ENCODE measurements at regions of chr6 and their contacts with region 1.

Region 1: DNA sequence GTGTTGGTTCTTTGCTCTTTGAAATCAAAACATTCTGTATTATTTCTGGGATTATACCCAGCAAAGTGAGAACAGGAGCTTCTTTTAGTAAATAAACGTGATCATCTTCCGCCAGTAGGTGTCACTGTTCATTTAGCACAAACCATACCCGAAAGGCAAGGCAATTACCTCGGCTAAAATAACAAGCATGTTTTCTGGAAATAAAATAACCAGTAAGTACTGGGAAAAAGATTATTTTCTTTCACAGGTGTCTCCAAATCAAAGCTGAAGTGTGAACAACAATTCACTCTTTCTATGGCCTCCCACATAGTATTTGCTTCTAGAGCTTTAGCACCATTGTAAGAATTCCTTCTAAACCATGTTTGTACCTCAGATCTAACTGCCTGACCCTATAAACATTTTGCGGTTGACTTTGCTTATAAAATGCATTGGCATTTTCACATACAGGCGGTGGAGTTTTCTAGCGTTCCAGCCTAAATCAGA is 144.6 kb upstream of the AGPAT4 start:
- DNase-seq: peak; percentile 73
- H3K4me3 ChIP-seq: no peak overlapping the region
- H3K27ac ChIP-seq: no peak overlapping the region
- H3K4me1 ChIP-seq: no peaks in the 10 kb centered on the region
- H3K27me3 ChIP-seq: no peaks in the 10 kb centered on the region
- CTCF ChIP-seq: peak; percentile 45 to 50
- POLR2A ChIP-seq: no peak

Region 2: GRCh38 chr6:161186173-161186769 is 232.2 kb before region 1 on chr6:
- CTCF ChIA-PET with region 1: no interaction called
- POLR2A ChIA-PET with region 1: no interaction called
- dilution Hi-C with region 1: no loop called
- intact Hi-C with region 1: no loop called
- DNase-seq: no peak
- H3K4me3 ChIP-seq: no peak overlapping the region
- H3K27ac ChIP-seq: no peak overlapping the region
- H3K4me1 ChIP-seq: no peaks in the 10 kb centered on the region
- H3K27me3 ChIP-seq: no peaks in the 10 kb centered on the region
- CTCF ChIP-seq: no peak
- POLR2A ChIP-seq: no peak

Region 3: DNA sequence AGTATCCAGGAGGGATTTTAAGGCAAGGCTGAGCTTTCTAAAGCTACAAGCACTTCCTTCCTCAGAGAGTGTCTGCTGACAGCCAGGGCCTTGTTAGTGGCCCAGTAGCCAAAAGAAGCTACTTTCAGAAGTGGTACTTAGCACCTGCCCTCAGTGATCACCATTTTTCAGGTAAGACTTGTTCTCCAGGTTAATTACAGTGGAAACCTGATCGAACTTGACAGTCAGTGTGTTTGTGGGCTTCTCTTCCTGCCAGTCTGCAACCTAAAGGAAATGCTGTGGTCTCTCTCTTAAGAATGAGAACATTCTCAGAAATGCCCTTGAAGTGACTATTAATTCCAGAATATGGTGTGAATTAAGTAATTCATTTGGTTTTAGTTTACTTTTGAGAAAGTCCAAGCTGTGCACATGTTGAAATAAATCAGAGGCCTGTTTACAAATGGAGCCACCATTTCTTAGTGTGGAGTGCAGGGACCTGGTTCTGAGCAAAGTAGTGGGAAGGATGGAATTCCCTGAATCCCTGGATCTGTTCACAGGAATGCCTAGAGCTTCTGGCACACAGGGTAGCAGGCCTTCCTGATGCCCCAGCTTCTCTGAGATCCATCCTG is 40.6 kb after region 1 on chr6:
- CTCF ChIA-PET with region 1: no interaction called
- POLR2A ChIA-PET with region 1: no interaction called
- dilution Hi-C with region 1: no loop called
- intact Hi-C with region 1: no loop called
- DNase-seq: no peak
- H3K4me3 ChIP-seq: no peak overlapping the region
- H3K27ac ChIP-seq: no peak overlapping the region
- H3K4me1 ChIP-seq: no peaks in the 10 kb centered on the region
- H3K27me3 ChIP-seq: no peaks in the 10 kb centered on the region
- CTCF ChIP-seq: no peak
- POLR2A ChIP-seq: no peak

Region 4: DNA sequence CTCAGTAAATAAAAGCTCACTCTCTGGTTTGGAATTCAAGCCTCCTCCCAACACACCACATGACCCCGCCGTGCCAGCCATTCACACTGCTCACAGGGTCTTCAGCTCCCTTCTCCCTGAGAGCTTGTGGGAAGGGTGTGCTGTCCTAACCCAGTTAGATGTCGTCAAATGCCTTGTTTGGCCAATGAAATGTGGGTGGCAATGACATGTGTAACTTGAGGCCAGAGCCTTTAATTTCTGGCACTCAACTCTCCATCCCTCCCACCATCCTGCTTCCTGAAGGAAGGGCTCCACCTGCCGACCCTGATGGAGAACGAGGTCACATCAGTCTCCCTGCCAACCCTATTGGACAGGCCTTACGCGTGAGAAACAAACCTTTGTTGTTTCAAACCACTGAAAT is 79.9 kb after region 1 on chr6:
- CTCF ChIA-PET with region 1: interaction called, 4 read pairs
- POLR2A ChIA-PET with region 1: no interaction called
- dilution Hi-C with region 1: no loop called
- intact Hi-C with region 1: loop called (anchors 1 kb)
- DNase-seq: no peak
- H3K4me3 ChIP-seq: no peak overlapping the region
- H3K27ac ChIP-seq: no peak overlapping the region
- H3K4me1 ChIP-seq: no peaks in the 10 kb centered on the region
- H3K27me3 ChIP-seq: no peaks in the 10 kb centered on the region
- CTCF ChIP-seq: no peak
- POLR2A ChIP-seq: no peak

Region 5: DNA sequence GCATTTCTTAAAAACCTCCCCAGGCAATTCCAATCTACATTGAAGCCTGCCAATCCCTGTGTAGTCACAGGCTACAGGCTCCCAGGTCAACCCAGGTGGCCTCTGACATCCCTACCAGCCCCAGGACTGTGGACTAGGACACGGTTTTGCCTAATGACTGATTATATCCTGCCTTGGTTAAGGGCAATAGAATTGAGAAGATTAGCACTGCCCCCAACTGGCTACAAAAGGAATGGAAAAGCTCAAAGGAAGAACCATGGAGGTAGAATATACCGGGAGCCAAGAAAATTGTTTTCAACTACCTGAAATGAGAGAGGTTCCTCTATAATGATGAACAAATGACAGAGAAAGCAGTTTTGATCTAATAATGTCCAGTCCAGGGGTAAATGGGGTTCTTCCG is 276.5 kb after region 1 on chr6:
- CTCF ChIA-PET with region 1: interaction called, 19 read pairs
- POLR2A ChIA-PET with region 1: no interaction called
- dilution Hi-C with region 1: no loop called
- intact Hi-C with region 1: loop called (anchors 1 kb)
- DNase-seq: peak; percentile 4
- H3K4me3 ChIP-seq: no peak overlapping the region
- H3K27ac ChIP-seq: no peak overlapping the region
- H3K4me1 ChIP-seq: no peaks in the 10 kb centered on the region
- H3K27me3 ChIP-seq: no peaks in the 10 kb centered on the region
- CTCF ChIP-seq: peak in 1 of 2 donors; percentile 9
- POLR2A ChIP-seq: no peak

Region 6: GRCh38 chr6:161748535-161749416 is 330.3 kb after region 1 on chr6:
- CTCF ChIA-PET with region 1: no interaction called
- POLR2A ChIA-PET with region 1: no interaction called
- dilution Hi-C with region 1: no loop called
- intact Hi-C with region 1: loop called (anchors 5 kb)
- DNase-seq: peak; percentile 5
- H3K4me3 ChIP-seq: no peak overlapping the region
- H3K27ac ChIP-seq: no peak overlapping the region
- H3K4me1 ChIP-seq: no peaks in the 10 kb centered on the region
- H3K27me3 ChIP-seq: no peaks in the 10 kb centered on the region
- CTCF ChIP-seq: peak; percentile 26 to 35
- POLR2A ChIP-seq: no peak

Region 7: DNA sequence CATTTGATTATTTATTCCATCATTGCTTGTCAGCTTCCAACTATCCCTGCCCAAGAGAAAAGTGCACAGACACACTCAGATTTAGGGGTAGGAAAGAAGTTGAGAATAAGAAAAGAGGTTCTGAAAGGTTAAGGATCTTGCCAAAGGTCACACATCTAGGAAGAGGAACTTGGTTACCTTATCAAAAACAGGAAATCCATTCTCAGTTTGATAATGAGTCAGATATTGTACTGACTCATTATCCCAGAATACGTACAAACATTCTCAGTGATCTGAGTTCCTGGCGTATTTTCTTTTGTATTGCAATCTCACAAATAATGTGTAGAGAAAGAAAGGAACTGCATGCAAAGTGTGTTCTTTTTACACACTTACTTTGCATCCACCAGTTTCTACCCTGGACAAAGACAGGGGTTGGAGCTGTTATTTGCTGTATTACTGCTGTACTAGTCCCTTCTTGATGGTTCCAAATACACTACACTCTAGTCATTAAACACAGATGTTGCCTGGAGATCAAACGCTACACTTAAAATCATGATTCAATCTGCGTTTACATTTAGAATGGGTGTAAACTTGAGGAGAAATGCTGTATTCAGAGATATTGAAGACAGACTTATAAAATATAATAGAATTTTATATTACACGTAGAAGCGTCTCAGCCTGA is 763.4 kb after region 1 on chr6:
- CTCF ChIA-PET with region 1: no interaction called
- POLR2A ChIA-PET with region 1: no interaction called
- dilution Hi-C with region 1: no loop called
- intact Hi-C with region 1: loop called (anchors 10 kb)
- DNase-seq: peak; percentile 64
- H3K4me3 ChIP-seq: no peak overlapping the region
- H3K27ac ChIP-seq: peak overlapping the region; percentile 64
- H3K4me1 ChIP-seq: peaks cover 17% of the 10 kb centered on the region
- H3K27me3 ChIP-seq: no peaks in the 10 kb centered on the region
- CTCF ChIP-seq: no peak
- POLR2A ChIP-seq: no peak

Region 8: DNA sequence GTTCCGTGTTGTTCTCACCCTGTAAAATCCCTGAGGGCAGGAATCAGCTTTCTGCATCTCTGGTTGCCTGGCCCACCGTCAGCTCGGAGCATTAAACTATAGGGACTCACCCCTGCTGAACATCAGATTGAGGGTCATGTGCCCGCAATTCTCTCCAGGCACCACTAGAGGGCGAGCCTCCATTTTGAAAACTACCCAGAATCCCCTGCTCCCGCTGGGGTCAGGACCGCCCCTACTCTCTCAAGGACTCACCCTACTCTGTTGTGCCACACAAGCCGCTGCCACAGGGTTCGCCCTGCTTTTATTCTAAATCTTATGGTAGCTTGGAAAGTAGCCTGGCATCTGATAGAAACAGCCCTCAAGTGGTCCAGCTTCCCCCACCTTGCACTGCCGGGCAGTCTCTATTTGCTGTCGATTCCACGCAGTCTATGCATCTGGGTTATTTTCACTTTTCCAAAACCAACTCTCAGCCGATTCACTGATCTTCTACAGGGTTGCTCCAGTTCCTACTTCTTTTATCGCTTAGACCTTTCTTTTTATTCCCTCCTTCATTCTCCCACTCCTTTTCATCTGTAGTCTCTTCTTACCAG is 1751.9 kb after region 1 on chr6:
- CTCF ChIA-PET with region 1: interaction called, 10 read pairs
- POLR2A ChIA-PET with region 1: no interaction called
- dilution Hi-C with region 1: no loop called
- intact Hi-C with region 1: no loop called
- DNase-seq: peak; percentile 14
- H3K4me3 ChIP-seq: no peak overlapping the region
- H3K27ac ChIP-seq: no peak overlapping the region
- H3K4me1 ChIP-seq: no peaks in the 10 kb centered on the region
- H3K27me3 ChIP-seq: peaks cover 2 to 3% of the 10 kb centered on the region in 2 experiments
- CTCF ChIP-seq: peak; percentile 76 to 77
- POLR2A ChIP-seq: no peak

Measured in endothelial cell of umbilical vein (primary cell).